Activated B cell treated with CpG ODN at 0.5 μM for 24 hours (primary cell): ENCODE measurements at regions of chr7 and their contacts with region 1.

Region 1: GRCh38 chr7:24907311-24907886 is 72.6 kb downstream of the OSBPL3 start:
- DNase-seq: no peak
- ATAC-seq: peak; percentile 62
- H3K4me3 Mint-ChIP-seq: no peak overlapping the region
- H3K27ac Mint-ChIP-seq: no peak overlapping the region
- H3K4me1 Mint-ChIP-seq: peaks cover 32% of the 10 kb centered on the region
- H3K27me3 Mint-ChIP-seq: no peaks in the 10 kb centered on the region
- CTCF ChIP-seq: no peak

Region 2: GRCh38 chr7:24851786-24852185 is 55.6 kb before region 1 on chr7:
- CTCF ChIA-PET with region 1: no interaction called
- POLR2A ChIA-PET with region 1: interaction called, 15 read pairs
- intact Hi-C with region 1: no loop called
- DNase-seq: no peak
- ATAC-seq: no peak
- H3K4me3 Mint-ChIP-seq: no peak overlapping the region
- H3K27ac Mint-ChIP-seq: no peak overlapping the region
- H3K4me1 Mint-ChIP-seq: peaks cover 7% of the 10 kb centered on the region
- H3K27me3 Mint-ChIP-seq: no peaks in the 10 kb centered on the region
- CTCF ChIP-seq: no peak

Region 3: DNA sequence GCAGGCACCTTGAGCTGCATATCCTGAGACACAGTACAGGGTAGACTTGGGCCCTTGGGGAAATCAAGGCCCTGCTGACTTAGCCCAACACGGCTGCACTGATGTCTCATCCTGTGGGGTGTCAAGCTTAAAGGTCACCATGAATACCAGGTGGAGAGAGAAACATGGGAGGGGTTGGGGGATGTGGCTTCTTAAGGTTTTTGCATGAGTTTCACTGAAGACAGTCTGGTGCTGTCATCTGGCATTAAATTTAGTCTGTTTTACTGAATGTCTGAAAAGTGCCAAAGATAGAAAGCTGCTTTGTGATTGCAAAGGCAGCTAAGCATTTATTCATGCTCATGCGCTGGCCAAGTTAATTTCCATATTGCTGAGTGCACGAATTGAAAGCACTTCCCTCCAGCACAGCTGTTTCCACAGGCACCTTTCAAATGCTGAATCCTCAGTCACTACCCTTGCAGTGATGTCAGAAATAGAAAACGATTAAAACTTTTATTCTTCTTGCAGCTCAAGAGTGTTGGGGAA is 29.5 kb before region 1 on chr7:
- CTCF ChIA-PET with region 1: no interaction called
- POLR2A ChIA-PET with region 1: no interaction called
- intact Hi-C with region 1: loop called (anchors 5 kb)
- DNase-seq: no peak
- ATAC-seq: peak; percentile 90
- H3K4me3 Mint-ChIP-seq: peak overlapping the region; percentile 64
- H3K27ac Mint-ChIP-seq: peak overlapping the region; percentile 83
- H3K4me1 Mint-ChIP-seq: peaks cover 34% of the 10 kb centered on the region
- H3K27me3 Mint-ChIP-seq: no peaks in the 10 kb centered on the region
- CTCF ChIP-seq: no peak

Region 4: DNA sequence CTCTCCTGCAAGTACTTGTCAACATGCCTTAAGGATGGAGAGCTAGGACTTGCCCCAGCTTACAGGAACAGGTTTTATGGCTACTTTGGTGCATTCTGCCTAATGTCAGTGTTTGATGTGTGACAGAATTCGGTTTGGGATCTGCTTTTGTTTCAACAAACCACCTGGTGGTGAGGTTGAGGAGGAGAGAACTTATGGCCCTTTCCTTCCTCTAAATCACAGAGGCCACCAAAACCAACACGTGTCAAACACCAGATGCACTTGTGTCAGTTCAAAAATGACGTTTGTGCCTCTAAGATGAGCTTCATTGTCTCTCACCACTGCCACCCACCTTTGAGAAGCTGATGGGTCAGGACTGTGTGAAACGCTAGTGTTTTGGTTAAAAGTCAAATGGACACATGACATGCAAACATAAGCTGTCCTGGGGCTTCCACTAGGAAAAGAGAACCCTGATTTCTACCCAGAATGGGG is 11.3 kb before region 1 on chr7:
- CTCF ChIA-PET with region 1: interaction called, 7 read pairs
- POLR2A ChIA-PET with region 1: no interaction called
- intact Hi-C with region 1: loop called (anchors 2 kb)
- DNase-seq: no peak
- ATAC-seq: peak; percentile 69
- H3K4me3 Mint-ChIP-seq: no peak overlapping the region
- H3K27ac Mint-ChIP-seq: peak overlapping the region; percentile 42
- H3K4me1 Mint-ChIP-seq: peaks cover 61% of the 10 kb centered on the region
- H3K27me3 Mint-ChIP-seq: no peaks in the 10 kb centered on the region
- CTCF ChIP-seq: no peak

Region 5: DNA sequence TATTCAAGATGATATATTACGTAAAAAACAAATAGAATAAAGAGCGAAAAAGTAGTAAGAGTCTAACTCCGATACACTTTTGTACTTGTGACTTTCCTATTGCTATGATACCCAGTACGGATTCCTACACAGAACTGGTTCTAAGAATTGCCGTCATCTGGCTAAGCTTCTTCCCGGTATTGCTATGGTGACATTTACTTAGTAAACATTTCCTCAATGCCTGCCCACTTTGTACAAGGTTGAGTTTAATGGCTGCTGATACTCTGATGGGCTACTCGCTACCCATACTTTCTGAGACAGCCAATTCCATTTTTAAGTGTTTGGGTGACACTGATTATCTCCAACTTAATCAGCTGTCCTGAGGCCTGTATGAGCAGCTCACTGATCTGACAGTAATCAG is 17.0 kb after region 1 on chr7:
- CTCF ChIA-PET with region 1: no interaction called
- POLR2A ChIA-PET with region 1: no interaction called
- intact Hi-C with region 1: loop called (anchors 1 kb)
- DNase-seq: no peak
- ATAC-seq: no peak
- H3K4me3 Mint-ChIP-seq: no peak overlapping the region
- H3K27ac Mint-ChIP-seq: no peak overlapping the region
- H3K4me1 Mint-ChIP-seq: peaks cover 30% of the 10 kb centered on the region
- H3K27me3 Mint-ChIP-seq: no peaks in the 10 kb centered on the region
- CTCF ChIP-seq: no peak

Region 6: GRCh38 chr7:24965831-24966709 is 58.7 kb after region 1 on chr7:
- CTCF ChIA-PET with region 1: no interaction called
- POLR2A ChIA-PET with region 1: interaction called, 7 read pairs
- intact Hi-C with region 1: loop called (anchors 2 kb)
- DNase-seq: no peak
- ATAC-seq: peak; percentile 57
- H3K4me3 Mint-ChIP-seq: peak overlapping the region; percentile 42
- H3K27ac Mint-ChIP-seq: peak overlapping the region; percentile 84
- H3K4me1 Mint-ChIP-seq: peaks cover 74% of the 10 kb centered on the region
- H3K27me3 Mint-ChIP-seq: no peaks in the 10 kb centered on the region
- CTCF ChIP-seq: no peak